ENCODE measurements at regions of chr20 and their contacts with region 1.

Region 1: DNA sequence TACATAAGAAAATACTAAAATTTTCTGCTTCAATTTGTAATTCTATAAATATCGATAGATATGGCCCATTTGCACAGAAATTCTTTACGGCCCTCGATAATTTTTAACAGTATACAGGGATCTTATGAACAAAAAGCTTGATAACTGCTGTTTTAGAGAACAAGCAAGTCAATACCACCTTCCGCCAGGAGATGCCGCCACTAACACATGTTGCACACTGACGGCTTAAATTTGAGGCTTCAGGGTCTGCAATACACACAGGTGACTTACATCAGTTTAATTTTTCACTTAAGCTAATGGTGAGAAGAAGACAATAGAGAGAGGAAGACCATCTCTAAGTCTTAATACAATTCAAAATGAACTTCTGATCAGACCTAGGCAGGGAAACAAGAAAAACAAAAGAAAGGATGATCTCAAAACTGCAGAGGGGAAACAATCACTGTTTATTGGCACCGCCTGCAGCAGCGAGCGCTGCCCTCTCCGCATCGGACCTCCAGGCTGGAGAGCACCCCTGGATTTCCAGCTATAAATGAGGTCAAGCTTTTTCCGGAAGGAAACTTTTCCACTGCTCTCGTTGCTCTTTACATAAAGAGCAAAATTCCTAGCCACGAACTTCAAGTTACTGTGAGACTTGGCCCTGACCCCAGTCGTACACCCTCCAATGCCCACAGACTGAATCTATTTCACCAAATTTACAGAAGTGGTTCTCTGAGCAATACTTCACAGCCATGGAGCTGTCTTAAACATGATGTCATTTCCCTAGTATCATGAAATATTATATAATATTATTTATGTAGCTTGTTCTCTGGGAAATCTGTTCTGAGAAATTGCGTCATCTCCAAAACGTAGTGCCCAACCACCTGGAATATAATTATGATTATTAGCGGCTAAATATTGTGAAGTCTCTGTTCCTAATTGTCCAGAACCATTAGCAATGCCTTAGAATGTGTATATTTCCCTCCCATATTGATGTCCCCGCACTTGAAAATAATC is 54.1 kb downstream of the OTOR start:
- DNase-seq: peak; percentile 61
- H3K4me3 Mint-ChIP-seq: no peak overlapping the region
- H3K27ac Mint-ChIP-seq: no peak overlapping the region
- H3K4me1 Mint-ChIP-seq: no peaks in the 10 kb centered on the region
- H3K27me3 Mint-ChIP-seq: peaks cover 88% of the 10 kb centered on the region
- CTCF ChIP-seq: peak; percentile 86

Region 2: DNA sequence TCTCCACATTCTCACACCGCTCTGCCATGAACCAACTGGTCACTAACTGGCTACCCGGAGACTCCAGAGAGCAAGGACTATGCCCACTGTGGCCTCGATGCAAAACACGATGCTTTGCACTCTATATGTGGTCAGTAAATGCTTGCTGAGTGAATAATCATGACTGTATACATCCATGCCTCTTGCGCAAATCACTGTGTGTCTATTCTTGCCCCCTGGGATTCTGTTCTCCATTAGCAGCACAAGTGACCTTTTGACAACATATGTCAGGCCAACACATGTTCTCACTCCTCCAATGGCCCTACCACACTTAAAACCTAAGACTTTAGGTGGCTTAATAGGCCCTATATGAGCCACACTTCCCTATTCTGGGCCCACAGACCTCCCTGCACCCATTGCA is 245.9 kb before region 1 on chr20:
- CTCF ChIA-PET with region 1: no interaction called
- POLR2A ChIA-PET with region 1: no interaction called
- intact Hi-C with region 1: no loop called
- DNase-seq: peak; percentile 83
- H3K4me3 Mint-ChIP-seq: no peak overlapping the region
- H3K27ac Mint-ChIP-seq: peak overlapping the region; percentile 13
- H3K4me1 Mint-ChIP-seq: peaks cover 25% of the 10 kb centered on the region
- H3K27me3 Mint-ChIP-seq: no peaks in the 10 kb centered on the region
- CTCF ChIP-seq: no peak

Region 3: GRCh38 chr20:16777126-16777525 is 25.1 kb before region 1 on chr20:
- CTCF ChIA-PET with region 1: interaction called, 20 read pairs
- POLR2A ChIA-PET with region 1: no interaction called
- intact Hi-C with region 1: no loop called
- DNase-seq: no peak
- H3K4me3 Mint-ChIP-seq: no peak overlapping the region
- H3K27ac Mint-ChIP-seq: no peak overlapping the region
- H3K4me1 Mint-ChIP-seq: no peaks in the 10 kb centered on the region
- H3K27me3 Mint-ChIP-seq: peaks cover 71% of the 10 kb centered on the region
- CTCF ChIP-seq: no peak

Region 4: GRCh38 chr20:16821211-16822089 is 19.2 kb after region 1 on chr20:
- CTCF ChIA-PET with region 1: interaction called, 116 read pairs
- POLR2A ChIA-PET with region 1: interaction called, 3 read pairs
- intact Hi-C with region 1: loop called (anchors 1 kb)
- DNase-seq: peak; percentile 57
- H3K4me3 Mint-ChIP-seq: no peak overlapping the region
- H3K27ac Mint-ChIP-seq: no peak overlapping the region
- H3K4me1 Mint-ChIP-seq: no peaks in the 10 kb centered on the region
- H3K27me3 Mint-ChIP-seq: peaks cover 75% of the 10 kb centered on the region
- CTCF ChIP-seq: peak; percentile 88

Region 5: DNA sequence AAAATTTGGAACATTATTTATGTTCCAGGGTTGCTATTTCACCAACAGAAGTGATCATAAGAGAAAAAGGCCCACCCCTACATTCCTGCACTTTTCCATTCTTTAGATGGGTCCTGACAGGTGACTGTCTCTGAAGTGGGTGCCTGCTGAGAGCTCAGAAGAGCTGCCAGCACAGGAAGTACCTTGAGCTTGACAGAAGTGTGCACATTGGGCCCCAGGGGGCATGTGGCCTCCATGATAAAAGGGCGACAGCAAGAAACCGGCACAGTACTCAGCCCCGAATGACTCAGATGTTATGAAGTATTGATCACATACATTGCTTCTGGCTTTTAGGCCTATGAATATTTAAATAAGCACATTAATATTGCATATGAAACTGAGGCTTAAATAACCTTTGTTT is 575.0 kb after region 1 on chr20:
- CTCF ChIA-PET with region 1: interaction called, 11 read pairs
- POLR2A ChIA-PET with region 1: no interaction called
- intact Hi-C with region 1: no loop called
- DNase-seq: no peak
- H3K4me3 Mint-ChIP-seq: no peak overlapping the region
- H3K27ac Mint-ChIP-seq: no peak overlapping the region
- H3K4me1 Mint-ChIP-seq: no peaks in the 10 kb centered on the region
- H3K27me3 Mint-ChIP-seq: peaks cover 14% of the 10 kb centered on the region
- CTCF ChIP-seq: no peak

Region 6: GRCh38 chr20:17431621-17432364 is 629.6 kb after region 1 on chr20:
- CTCF ChIA-PET with region 1: interaction called, 577 read pairs
- POLR2A ChIA-PET with region 1: interaction called, 12 read pairs
- intact Hi-C with region 1: loop called (anchors 1 kb)
- DNase-seq: peak; percentile 67
- H3K4me3 Mint-ChIP-seq: no peak overlapping the region
- H3K27ac Mint-ChIP-seq: no peak overlapping the region
- H3K4me1 Mint-ChIP-seq: no peaks in the 10 kb centered on the region
- H3K27me3 Mint-ChIP-seq: peaks cover 61% of the 10 kb centered on the region
- CTCF ChIP-seq: peak; percentile 95